ENCODE measurements at regions of chr18 and their contacts with region 1.

Region 1: DNA sequence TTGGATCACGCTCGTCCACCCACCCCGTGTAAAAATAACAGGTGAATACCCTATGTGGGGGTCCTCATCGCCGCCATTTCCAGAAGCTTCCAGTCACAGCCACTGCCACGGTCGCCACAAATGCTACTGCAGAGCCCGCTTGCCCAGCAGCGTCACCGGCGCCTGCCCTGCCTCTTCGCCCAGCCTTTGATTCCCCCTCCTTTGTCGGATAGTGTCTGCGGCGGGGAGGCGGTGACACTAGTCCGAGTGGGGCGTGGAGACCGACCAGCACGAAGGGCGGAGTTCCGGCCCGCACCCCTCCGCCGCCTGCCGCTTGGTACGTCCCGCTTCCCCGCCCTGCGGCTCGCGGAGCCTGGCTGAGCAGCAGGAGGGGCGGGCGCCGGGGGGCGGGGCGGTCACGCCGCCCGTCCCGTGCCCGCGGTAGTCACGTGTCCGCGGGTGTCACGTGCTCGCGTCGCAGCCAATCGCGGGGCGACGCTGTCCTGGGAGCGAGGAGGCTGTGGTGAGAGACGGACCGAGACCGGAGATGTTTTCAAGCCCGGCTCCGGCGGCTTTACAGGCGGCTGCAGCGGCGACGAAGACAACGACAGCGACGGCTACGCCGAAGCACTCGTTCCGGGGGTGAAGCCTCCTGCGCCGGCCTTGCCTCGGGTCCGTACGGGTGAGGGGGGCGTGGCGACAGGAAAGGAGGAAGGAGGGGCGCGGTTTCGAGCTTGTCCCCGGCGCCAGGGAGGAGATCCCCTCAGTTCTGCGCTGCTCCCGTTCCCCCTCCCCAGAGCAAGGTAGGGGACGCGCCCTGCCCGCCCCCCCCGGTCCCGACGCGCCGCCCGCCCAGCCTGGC is at the start of gene ANKRD12:
- DNase-seq: peak; percentile 95 to 100 (median 98)

Region 2: GRCh38 chr18:9102508-9103375 is 33.8 kb before region 1 on chr18 and contains the start of gene NDUFV2:
- intact Hi-C with region 1: loop called (anchors 1 kb)
- DNase-seq: peak; percentile 94 to 100 (median 96)

Measured in posterior cingulate gyrus (tissue), 11 donors.